GM12878 (cell line): ENCODE measurements at regions of chr7 and their contacts with region 1.

Region 1: GRCh38 chr7:114832906-114833595 is 88.8 kb upstream of the MDFIC start:
- DNase-seq: peak; percentile 48
- ATAC-seq: peak; percentile 90
- H3K4me3 ChIP-seq: no peak overlapping the region
- H3K27ac ChIP-seq: peak overlapping the region; percentile 74
- H3K4me1 ChIP-seq: peaks cover 16% of the 10 kb centered on the region; the same call in 1 of the 2 replicates
- H3K27me3 ChIP-seq: no peaks in the 10 kb centered on the region
- CTCF ChIP-seq: no peak
- EP300 ChIP-seq: peak; percentile 3 to 53; a peak in 1 of 4 replicates
- POLR2A ChIP-seq: no peak
- RAD21 ChIP-seq: no peak

Region 2: GRCh38 chr7:114439581-114439980 is 393.5 kb before region 1 on chr7:
- CTCF ChIA-PET with region 1: no interaction called
- POLR2A ChIA-PET with region 1: no interaction called
- RAD21 ChIA-PET with region 1: no interaction called
- SMC1A ChIA-PET with region 1: no interaction called
- in situ Hi-C with region 1: no loop called
- intact Hi-C with region 1: loop called (anchors 10 kb)
- DNase-seq: no peak
- ATAC-seq: no peak
- H3K4me3 ChIP-seq: no peak overlapping the region
- H3K27ac ChIP-seq: no peak overlapping the region
- H3K4me1 ChIP-seq: no peaks in the 10 kb centered on the region
- H3K27me3 ChIP-seq: no peaks in the 10 kb centered on the region
- CTCF ChIP-seq: no peak
- EP300 ChIP-seq: no peak
- POLR2A ChIP-seq: no peak
- RAD21 ChIP-seq: no peak

Region 3: GRCh38 chr7:114554781-114555537 is 278.1 kb before region 1 on chr7:
- CTCF ChIA-PET with region 1: no interaction called
- POLR2A ChIA-PET with region 1: no interaction called
- RAD21 ChIA-PET with region 1: no interaction called
- SMC1A ChIA-PET with region 1: no interaction called
- in situ Hi-C with region 1: no loop called
- intact Hi-C with region 1: loop called (anchors 10 kb)
- DNase-seq: peak; percentile 41
- ATAC-seq: peak; percentile 91
- H3K4me3 ChIP-seq: no peak overlapping the region
- H3K27ac ChIP-seq: peak overlapping the region; percentile 54
- H3K4me1 ChIP-seq: no peaks in the 10 kb centered on the region; the same call in 1 of the 2 replicates
- H3K27me3 ChIP-seq: no peaks in the 10 kb centered on the region
- CTCF ChIP-seq: no peak
- EP300 ChIP-seq: peak; percentile 8 to 66; a peak in 1 of 4 replicates
- POLR2A ChIP-seq: no peak
- RAD21 ChIP-seq: 0 out of 2 replicates have a peak, but pooled peaks have one; percentile 1

Region 4: DNA sequence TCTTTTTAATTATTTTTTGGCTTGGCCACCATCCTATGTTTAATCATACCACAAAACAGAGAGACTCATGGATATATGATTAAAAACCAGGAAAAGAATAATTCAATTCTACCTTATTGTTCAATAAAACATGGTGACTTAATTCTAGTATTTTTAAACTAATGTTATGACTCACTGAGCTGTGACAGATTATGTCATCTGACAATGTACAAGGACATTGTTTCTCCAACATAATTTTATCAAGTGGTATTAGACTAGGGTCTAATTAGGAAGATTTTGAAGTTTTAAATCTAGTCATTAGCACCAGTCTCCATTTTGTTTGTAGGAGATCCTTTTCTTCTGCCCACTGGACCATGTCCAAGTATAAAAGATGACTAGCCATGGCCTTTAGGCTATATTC is 110.5 kb before region 1 on chr7:
- CTCF ChIA-PET with region 1: no interaction called
- POLR2A ChIA-PET with region 1: no interaction called
- RAD21 ChIA-PET with region 1: no interaction called
- SMC1A ChIA-PET with region 1: interaction called, 3 read pairs
- in situ Hi-C with region 1: no loop called
- intact Hi-C with region 1: loop called (anchors 2 kb)
- DNase-seq: no peak
- ATAC-seq: peak; percentile 55
- H3K4me3 ChIP-seq: no peak overlapping the region
- H3K27ac ChIP-seq: no peak overlapping the region
- H3K4me1 ChIP-seq: no peaks in the 10 kb centered on the region
- H3K27me3 ChIP-seq: no peaks in the 10 kb centered on the region
- CTCF ChIP-seq: no peak
- EP300 ChIP-seq: 0 out of 4 replicates have a peak, but pooled peaks of 1 of the 2 experiments have one; percentile 15
- POLR2A ChIP-seq: no peak
- RAD21 ChIP-seq: no peak

Region 5: GRCh38 chr7:114765331-114766040 is 67.6 kb before region 1 on chr7:
- CTCF ChIA-PET with region 1: interaction called, 5 read pairs
- POLR2A ChIA-PET with region 1: interaction called, 3 read pairs
- RAD21 ChIA-PET with region 1: interaction called, 3 read pairs
- SMC1A ChIA-PET with region 1: no interaction called
- in situ Hi-C with region 1: no loop called
- intact Hi-C with region 1: loop called (anchors 5 kb)
- DNase-seq: no peak
- ATAC-seq: no peak
- H3K4me3 ChIP-seq: no peak overlapping the region
- H3K27ac ChIP-seq: no peak overlapping the region
- H3K4me1 ChIP-seq: no peaks in the 10 kb centered on the region
- H3K27me3 ChIP-seq: no peaks in the 10 kb centered on the region
- CTCF ChIP-seq: no peak
- EP300 ChIP-seq: no peak
- POLR2A ChIP-seq: no peak
- RAD21 ChIP-seq: no peak

Region 6: GRCh38 chr7:114799628-114800028 is 33.4 kb before region 1 on chr7:
- CTCF ChIA-PET with region 1: no interaction called
- POLR2A ChIA-PET with region 1: no interaction called
- RAD21 ChIA-PET with region 1: interaction called, 6 read pairs
- SMC1A ChIA-PET with region 1: interaction called, 10 read pairs
- in situ Hi-C with region 1: no loop called
- intact Hi-C with region 1: no loop called
- DNase-seq: peak; percentile 3
- ATAC-seq: peak; percentile 80
- H3K4me3 ChIP-seq: no peak overlapping the region
- H3K27ac ChIP-seq: no peak overlapping the region
- H3K4me1 ChIP-seq: no peaks in the 10 kb centered on the region
- H3K27me3 ChIP-seq: no peaks in the 10 kb centered on the region
- CTCF ChIP-seq: no peak
- EP300 ChIP-seq: peak in 1 of 2 experiments; percentile 31; a peak in 1 of 4 replicates
- POLR2A ChIP-seq: no peak
- RAD21 ChIP-seq: no peak

Region 7: GRCh38 chr7:114813624-114814023 is 19.4 kb before region 1 on chr7:
- CTCF ChIA-PET with region 1: interaction called, 4 read pairs
- POLR2A ChIA-PET with region 1: no interaction called
- RAD21 ChIA-PET with region 1: no interaction called
- SMC1A ChIA-PET with region 1: interaction called, 10 read pairs
- in situ Hi-C with region 1: no loop called
- intact Hi-C with region 1: no loop called
- DNase-seq: no peak
- ATAC-seq: no peak
- H3K4me3 ChIP-seq: no peak overlapping the region
- H3K27ac ChIP-seq: no peak overlapping the region
- H3K4me1 ChIP-seq: no peaks in the 10 kb centered on the region
- H3K27me3 ChIP-seq: no peaks in the 10 kb centered on the region
- CTCF ChIP-seq: no peak
- EP300 ChIP-seq: no peak
- POLR2A ChIP-seq: no peak
- RAD21 ChIP-seq: no peak

Region 8: GRCh38 chr7:115099906-115100305 is 266.9 kb after region 1 on chr7:
- CTCF ChIA-PET with region 1: no interaction called
- POLR2A ChIA-PET with region 1: no interaction called
- RAD21 ChIA-PET with region 1: no interaction called
- SMC1A ChIA-PET with region 1: no interaction called
- in situ Hi-C with region 1: no loop called
- intact Hi-C with region 1: no loop called
- DNase-seq: no peak
- ATAC-seq: no peak
- H3K4me3 ChIP-seq: no peak overlapping the region
- H3K27ac ChIP-seq: no peak overlapping the region
- H3K4me1 ChIP-seq: no peaks in the 10 kb centered on the region
- H3K27me3 ChIP-seq: no peaks in the 10 kb centered on the region
- CTCF ChIP-seq: no peak
- EP300 ChIP-seq: no peak
- POLR2A ChIP-seq: no peak
- RAD21 ChIP-seq: no peak